ENCODE measurements at regions of chr4 and their contacts with region 1.

Region 1: GRCh38 chr4:41934815-41935651 is at the start of gene TMEM33:
- DNase-seq: peak; percentile 84 to 86
- H3K4me3 ChIP-seq: peak within 1 kb of the TSS; percentile 66 to 88
- H3K27ac ChIP-seq: peak within 1 kb of the TSS; percentile 24 to 76
- H3K4me1 ChIP-seq: peaks cover 0 to 12% of the 10 kb centered on the region in 2 donors
- H3K27me3 ChIP-seq: no peaks in the 10 kb centered on the region
- CTCF ChIP-seq: peak in 1 of 4 experiments; percentile 19
- POLR2A ChIP-seq: peak in 1 of 2 donors; percentile 61
- total RNA-seq, gene TMEM33: 30.9 to 61.1 (median 47.8) TPM

Region 2: DNA sequence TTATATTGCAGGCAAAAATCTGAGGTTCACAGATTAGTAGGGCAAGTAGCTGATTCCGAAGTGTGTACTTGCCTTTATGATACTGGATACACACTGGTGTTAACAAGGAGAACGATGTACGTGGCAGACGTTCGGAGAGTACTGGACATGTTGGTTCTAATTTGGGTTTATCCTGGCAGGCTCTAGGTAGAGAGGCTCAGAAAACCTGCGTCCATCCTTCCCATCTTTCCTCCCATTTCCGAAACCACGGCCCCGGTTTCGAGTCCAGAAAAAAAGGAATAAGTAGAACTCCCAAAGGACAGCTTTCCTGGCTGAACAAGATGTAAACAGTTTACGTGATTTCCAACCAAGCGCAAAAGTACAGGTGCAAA is 54.9 kb after region 1 on chr4:
- intact Hi-C with region 1: loop called (anchors 10 kb)
- DNase-seq: no peak
- H3K4me3 ChIP-seq: peak overlapping the region; percentile 69 to 82
- H3K27ac ChIP-seq: peak overlapping the region; percentile 60 to 81
- H3K4me1 ChIP-seq: peaks cover 0 to 12% of the 10 kb centered on the region in 2 donors
- H3K27me3 ChIP-seq: no peaks in the 10 kb centered on the region
- CTCF ChIP-seq: no peak
- POLR2A ChIP-seq: no peak

Measured in uterus (tissue), 4 donors.